PC-9 (cell line): ENCODE measurements at regions of chr10 and their contacts with region 1.

Region 1: DNA sequence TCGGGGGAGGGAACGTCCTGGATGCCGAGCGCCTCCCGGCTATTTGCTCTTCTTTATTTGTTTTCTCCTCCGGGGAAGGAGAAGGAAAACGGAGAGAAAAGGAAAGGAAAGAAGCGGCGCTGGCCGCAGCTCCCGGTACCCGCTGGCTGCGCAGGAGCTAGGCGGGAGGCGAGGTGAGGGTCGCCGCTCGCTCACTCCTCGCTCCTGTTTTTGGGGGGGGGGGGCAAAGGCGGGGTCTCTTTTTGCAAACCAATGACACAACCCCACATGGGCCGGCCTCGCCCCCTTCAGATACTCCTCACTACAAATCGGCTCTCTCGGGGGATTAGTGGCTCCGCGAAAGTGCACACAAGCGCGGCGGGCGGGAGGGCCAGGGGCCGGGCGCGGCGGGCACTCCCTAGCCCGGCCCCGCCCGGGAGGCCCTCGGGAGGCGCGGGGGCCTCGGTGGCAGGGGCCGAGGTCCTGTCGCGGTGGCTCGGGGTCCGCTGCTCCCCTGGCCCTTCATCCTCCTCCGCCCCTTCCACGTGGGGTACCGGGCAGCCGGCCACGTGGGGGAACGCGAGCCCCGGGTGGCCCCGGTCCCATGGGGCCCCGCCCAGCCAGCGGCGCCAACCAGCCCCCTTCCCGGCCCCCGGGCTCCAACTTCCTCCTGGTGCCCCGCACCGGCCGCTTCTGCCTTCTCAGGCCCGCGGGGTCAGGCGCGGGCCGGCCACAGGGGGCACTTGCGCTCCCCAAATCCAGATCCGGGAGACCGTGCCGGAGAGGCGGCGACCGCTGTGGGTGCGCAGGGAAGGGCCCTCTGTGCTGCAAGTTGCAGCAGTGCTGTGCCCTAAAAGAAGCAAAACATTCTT is 718 bp upstream of the CTBP2 start:
- DNase-seq: peak; percentile 71 to 78
- H3K4me3 ChIP-seq: peak overlapping the region; percentile 72
- H3K27ac ChIP-seq: peak overlapping the region; percentile 95
- H3K4me1 ChIP-seq: peaks cover 24% of the 10 kb centered on the region
- H3K27me3 ChIP-seq: no peaks in the 10 kb centered on the region
- CTCF ChIP-seq: peak; percentile 55; the same call in 1 of the 2 replicates

Region 2: GRCh38 chr10:125048101-125048864 is 112.8 kb before region 1 on chr10:
- CTCF ChIA-PET with region 1: no interaction called
- POLR2A ChIA-PET with region 1: no interaction called
- intact Hi-C with region 1: loop called (anchors 5 kb)
- DNase-seq: peak; percentile 44 to 72
- H3K4me3 ChIP-seq: no peak overlapping the region
- H3K27ac ChIP-seq: no peak overlapping the region
- H3K4me1 ChIP-seq: peaks cover 32% of the 10 kb centered on the region
- H3K27me3 ChIP-seq: no peaks in the 10 kb centered on the region
- CTCF ChIP-seq: peak; percentile 85

Region 3: DNA sequence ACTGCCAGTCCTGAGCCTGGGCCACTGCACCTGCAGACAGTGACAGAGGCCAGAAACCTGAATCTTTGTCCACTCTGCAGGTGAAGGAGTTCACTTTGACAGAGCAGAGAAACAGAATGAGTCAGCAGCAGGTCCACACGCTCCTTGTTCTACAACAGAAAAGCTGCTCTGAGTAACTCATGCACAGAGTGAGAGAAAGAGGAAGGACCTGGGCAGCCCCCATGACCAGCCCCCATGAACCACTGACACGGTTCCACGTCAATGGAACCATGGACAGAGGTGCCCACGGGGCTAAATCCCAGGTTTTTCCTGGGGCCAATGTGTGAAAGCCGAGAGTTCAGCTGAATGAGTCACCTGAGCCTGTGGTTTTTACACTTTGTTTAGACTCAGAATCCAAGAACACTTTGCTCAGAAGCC is 40.0 kb after region 1 on chr10:
- CTCF ChIA-PET with region 1: no interaction called
- POLR2A ChIA-PET with region 1: no interaction called
- intact Hi-C with region 1: loop called (anchors 5 kb)
- DNase-seq: peak; percentile 70 to 92
- H3K4me3 ChIP-seq: peak overlapping the region; percentile 40; the same call in 1 of the 2 replicates
- H3K27ac ChIP-seq: peak overlapping the region; percentile 94
- H3K4me1 ChIP-seq: peaks cover 34% of the 10 kb centered on the region
- H3K27me3 ChIP-seq: no peaks in the 10 kb centered on the region
- CTCF ChIP-seq: no peak

Region 4: DNA sequence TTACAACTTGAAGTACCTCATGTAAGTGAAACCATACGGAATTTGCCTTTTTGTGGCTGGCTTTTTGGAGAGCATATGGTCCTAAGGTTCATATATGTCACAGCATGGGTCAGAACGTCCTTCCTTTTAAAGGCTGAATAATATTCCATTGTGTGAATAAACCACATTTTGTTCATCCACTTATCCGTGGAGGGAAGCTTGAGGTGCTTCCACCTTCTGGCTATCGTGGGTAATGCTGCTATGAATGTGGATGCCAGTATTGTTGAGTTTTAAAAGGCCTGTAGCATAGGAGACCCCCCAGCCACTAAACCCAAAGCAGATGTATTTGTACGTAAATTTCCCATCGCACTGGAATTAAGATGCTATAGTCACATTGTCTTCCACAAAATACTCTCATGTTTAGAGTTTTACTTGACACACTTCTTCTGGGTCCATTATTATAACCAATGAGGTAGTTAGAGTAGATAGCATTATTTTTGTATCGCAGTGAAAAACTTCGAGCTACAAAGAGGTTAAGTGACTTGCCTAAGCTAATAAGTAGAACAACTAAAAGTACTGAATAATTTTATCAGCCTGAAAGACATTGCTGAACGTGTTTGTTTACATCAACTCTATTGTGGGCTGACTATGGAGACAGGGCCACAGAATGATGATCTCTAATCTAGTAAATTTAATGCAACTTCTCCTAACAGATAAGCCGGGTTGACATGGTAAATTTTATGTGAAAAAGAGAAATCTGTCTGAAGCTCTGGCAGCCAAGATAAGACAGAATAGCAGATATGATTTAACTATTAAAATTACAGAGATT is 182.2 kb after region 1 on chr10:
- CTCF ChIA-PET with region 1: no interaction called
- POLR2A ChIA-PET with region 1: no interaction called
- intact Hi-C with region 1: loop called (anchors 1 kb)
- DNase-seq: no peak
- H3K4me3 ChIP-seq: no peak overlapping the region
- H3K27ac ChIP-seq: no peak overlapping the region
- H3K4me1 ChIP-seq: no peaks in the 10 kb centered on the region
- H3K27me3 ChIP-seq: no peaks in the 10 kb centered on the region
- CTCF ChIP-seq: peak; percentile 71

Region 5: GRCh38 chr10:125661941-125662515 is 500.9 kb after region 1 on chr10:
- CTCF ChIA-PET with region 1: no interaction called
- POLR2A ChIA-PET with region 1: interaction called, 17 read pairs
- intact Hi-C with region 1: no loop called
- DNase-seq: peak; percentile 73 to 93
- H3K4me3 ChIP-seq: no peak overlapping the region
- H3K27ac ChIP-seq: peak overlapping the region; percentile 90
- H3K4me1 ChIP-seq: peaks cover 22% of the 10 kb centered on the region
- H3K27me3 ChIP-seq: no peaks in the 10 kb centered on the region
- CTCF ChIP-seq: no peak

Region 6: GRCh38 chr10:125719146-125720001 is 558.3 kb after region 1 on chr10 and contains the start of gene EDRF1:
- CTCF ChIA-PET with region 1: no interaction called
- POLR2A ChIA-PET with region 1: interaction called, 18 read pairs
- intact Hi-C with region 1: no loop called
- DNase-seq: peak; percentile 92 to 97
- H3K4me3 ChIP-seq: peak within 1 kb of the TSS; percentile 98
- H3K27ac ChIP-seq: peak within 1 kb of the TSS; percentile 76
- H3K4me1 ChIP-seq: peaks cover 12% of the 10 kb centered on the region
- H3K27me3 ChIP-seq: no peaks in the 10 kb centered on the region
- CTCF ChIP-seq: no peak
- total RNA-seq, gene EDRF1: 12.8 and 21.7 TPM in 2 replicates